GM10248 (cell line): ENCODE measurements at regions of chr20 and their contacts with region 1.

Region 1: DNA sequence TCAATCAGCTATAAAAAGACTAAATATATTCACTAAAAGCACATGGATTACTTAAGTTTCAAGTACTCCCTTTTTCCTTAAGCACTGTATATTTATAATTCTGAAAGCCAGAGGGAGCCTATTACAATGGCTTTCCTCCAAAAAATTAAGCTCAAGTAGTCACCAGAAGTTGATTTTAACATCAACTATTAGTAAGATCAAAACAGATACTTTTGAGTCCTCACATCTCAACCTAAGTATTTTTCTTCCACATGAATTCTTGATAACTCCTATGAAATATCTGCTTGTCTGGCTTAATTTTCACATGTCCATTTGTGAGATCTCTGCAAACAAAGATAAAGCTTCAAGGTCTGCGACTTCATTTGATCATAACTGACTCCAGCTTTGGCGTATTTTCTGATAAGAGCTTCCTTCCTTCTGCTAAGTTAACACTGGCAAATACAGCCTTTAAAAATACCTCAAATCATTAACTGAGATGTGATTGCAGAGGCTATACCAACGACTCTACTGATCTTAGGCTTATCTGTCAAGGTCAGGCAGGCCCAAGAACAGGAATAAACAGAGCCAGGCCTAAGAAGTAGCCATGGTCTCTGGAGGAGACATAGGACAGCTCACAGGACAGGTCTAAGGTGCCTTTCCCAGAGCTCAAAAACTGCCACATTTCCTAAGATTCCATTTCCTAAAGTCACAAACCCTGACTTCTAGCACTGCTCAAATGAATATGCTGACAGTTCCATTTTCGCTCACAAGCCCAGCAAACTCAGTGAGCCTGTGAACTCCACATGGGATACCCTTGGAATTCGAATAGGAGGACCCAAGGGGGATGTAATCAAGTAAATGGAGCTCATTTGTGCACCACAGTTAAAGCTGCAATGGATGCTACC is 10.0 kb downstream of the SNX5 start:
- DNase-seq: no peak
- CTCF ChIP-seq: no peak

Region 2: GRCh38 chr20:17909869-17910321 is 48.7 kb before region 1 on chr20:
- CTCF ChIA-PET with region 1: no interaction called
- POLR2A ChIA-PET with region 1: no interaction called
- DNase-seq: no peak
- CTCF ChIP-seq: no peak

Region 3: GRCh38 chr20:17946572-17947473 is 11.8 kb before region 1 on chr20:
- CTCF ChIA-PET with region 1: interaction called, 28 read pairs
- POLR2A ChIA-PET with region 1: interaction called, 6 read pairs
- DNase-seq: no peak
- CTCF ChIP-seq: no peak

Region 4: GRCh38 chr20:17968366-17969279 is 10.0 kb after region 1 on chr20 and contains the starts of genes MGME1 and SNX5:
- CTCF ChIA-PET with region 1: interaction called, 69 read pairs
- POLR2A ChIA-PET with region 1: interaction called, 12 read pairs
- DNase-seq: peak; percentile 98
- CTCF ChIP-seq: no peak

Region 5: GRCh38 chr20:18066421-18067336 is 108.1 kb after region 1 on chr20:
- CTCF ChIA-PET with region 1: no interaction called
- POLR2A ChIA-PET with region 1: no interaction called
- DNase-seq: no peak
- CTCF ChIP-seq: no peak